ENCODE measurements at regions of chr1 and their contacts with region 1.

Region 1: DNA sequence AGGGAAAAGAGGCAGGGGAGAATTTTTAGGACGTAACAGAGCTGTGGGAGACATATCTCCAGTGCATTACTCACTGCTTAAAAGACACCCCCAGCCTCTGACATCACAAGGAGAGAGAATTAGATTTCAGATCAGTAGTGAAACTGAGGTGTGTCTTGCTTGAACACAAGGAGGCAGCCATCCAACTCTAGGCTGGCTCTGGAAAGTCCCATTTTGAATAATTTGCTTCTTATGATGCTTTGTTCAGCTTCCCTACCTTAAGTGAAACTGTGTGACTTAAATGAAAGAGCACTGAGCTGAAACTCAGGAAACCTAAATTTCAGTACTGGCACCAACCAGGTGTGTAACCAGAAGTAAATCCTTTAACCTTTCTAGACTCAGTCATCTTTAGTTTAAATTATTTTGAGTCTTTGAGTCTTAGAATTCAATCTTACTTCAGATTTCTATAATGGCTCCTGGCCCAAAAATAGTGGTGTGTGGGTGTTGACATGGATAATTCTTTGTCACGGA is 251.6 kb upstream of the SGIP1 start:
- DNase-seq: peak; percentile 98
- ATAC-seq: peak; percentile 75
- H3K4me3 ChIP-seq: peak overlapping the region; percentile 18; the same call in 1 of the 2 replicates
- H3K27ac ChIP-seq: peak overlapping the region; percentile 97
- H3K4me1 ChIP-seq: peaks cover 49% of the 10 kb centered on the region
- H3K27me3 ChIP-seq: no peaks in the 10 kb centered on the region
- CTCF ChIP-seq: peak; percentile 21 to 52 (median 25); a peak in 4 of 6 replicates
- EP300 ChIP-seq: peak; percentile 98 to 99
- POLR2A ChIP-seq: no peak
- RAD21 ChIP-seq: peak; percentile 45; the same call in 1 of the 2 replicates

Region 2: DNA sequence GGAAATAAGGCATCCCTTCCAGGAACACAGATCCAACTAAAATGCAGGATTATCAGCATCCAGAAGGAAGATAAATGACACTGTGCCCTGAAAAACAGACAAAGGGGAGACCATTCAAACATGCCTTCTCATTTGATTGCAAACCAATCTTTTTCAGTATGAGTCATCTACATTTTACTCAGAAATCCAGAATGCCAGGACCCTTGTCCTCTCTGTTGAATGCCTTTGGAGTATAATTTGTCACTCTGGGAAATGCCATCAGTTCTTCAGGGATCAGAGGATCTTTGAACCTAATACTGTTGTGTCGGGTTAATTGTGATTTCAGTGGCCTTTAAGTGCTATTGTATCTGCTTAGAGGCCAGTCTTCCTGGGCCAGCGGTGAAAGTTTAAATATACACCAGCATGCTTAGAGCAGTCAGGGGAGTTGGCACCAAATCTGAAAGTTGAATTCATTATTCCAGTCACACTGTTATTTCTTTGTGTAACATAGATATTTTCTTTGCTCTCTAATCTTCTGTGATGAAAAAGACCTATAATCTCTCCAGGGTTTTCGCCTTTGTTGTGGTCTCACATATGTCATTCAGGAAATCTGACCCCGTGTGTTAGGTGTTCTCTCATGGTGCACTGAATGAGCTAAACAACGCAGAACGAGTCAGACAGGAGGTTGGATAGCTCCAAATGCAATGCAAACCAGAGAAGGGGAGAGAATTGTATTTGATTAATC is 113.3 kb before region 1 on chr1:
- CTCF ChIA-PET with region 1: no interaction called
- POLR2A ChIA-PET with region 1: no interaction called
- RAD21 ChIA-PET with region 1: no interaction called
- SMC1A ChIA-PET with region 1: no interaction called
- in situ Hi-C with region 1: no loop called
- intact Hi-C with region 1: no loop called
- DNase-seq: no peak
- ATAC-seq: no peak
- H3K4me3 ChIP-seq: no peak overlapping the region
- H3K27ac ChIP-seq: no peak overlapping the region
- H3K4me1 ChIP-seq: no peaks in the 10 kb centered on the region
- H3K27me3 ChIP-seq: no peaks in the 10 kb centered on the region
- CTCF ChIP-seq: no peak
- EP300 ChIP-seq: no peak
- POLR2A ChIP-seq: no peak
- RAD21 ChIP-seq: no peak

Region 3: GRCh38 chr1:66217021-66217420 is 65.4 kb before region 1 on chr1:
- CTCF ChIA-PET with region 1: no interaction called
- POLR2A ChIA-PET with region 1: no interaction called
- RAD21 ChIA-PET with region 1: no interaction called
- SMC1A ChIA-PET with region 1: no interaction called
- in situ Hi-C with region 1: no loop called
- intact Hi-C with region 1: no loop called
- DNase-seq: no peak
- ATAC-seq: no peak
- H3K4me3 ChIP-seq: no peak overlapping the region
- H3K27ac ChIP-seq: no peak overlapping the region
- H3K4me1 ChIP-seq: no peaks in the 10 kb centered on the region
- H3K27me3 ChIP-seq: no peaks in the 10 kb centered on the region
- CTCF ChIP-seq: no peak
- EP300 ChIP-seq: no peak
- POLR2A ChIP-seq: no peak
- RAD21 ChIP-seq: no peak

Region 4: GRCh38 chr1:66271216-66271903 is 11.0 kb before region 1 on chr1:
- CTCF ChIA-PET with region 1: interaction called, 5 read pairs
- POLR2A ChIA-PET with region 1: interaction called, 4 read pairs
- RAD21 ChIA-PET with region 1: interaction called, 8 read pairs
- SMC1A ChIA-PET with region 1: interaction called, 15 read pairs
- in situ Hi-C with region 1: no loop called
- intact Hi-C with region 1: no loop called
- DNase-seq: no peak
- ATAC-seq: peak; percentile 58
- H3K4me3 ChIP-seq: no peak overlapping the region
- H3K27ac ChIP-seq: no peak overlapping the region
- H3K4me1 ChIP-seq: peaks cover 21% of the 10 kb centered on the region
- H3K27me3 ChIP-seq: no peaks in the 10 kb centered on the region
- CTCF ChIP-seq: no peak
- EP300 ChIP-seq: peak; percentile 38 to 77; a peak in 1 of 4 replicates
- POLR2A ChIP-seq: no peak
- RAD21 ChIP-seq: no peak

Region 5: GRCh38 chr1:66339944-66340343 is 57.5 kb after region 1 on chr1:
- CTCF ChIA-PET with region 1: interaction called, 37 read pairs
- POLR2A ChIA-PET with region 1: interaction called, 20 read pairs
- RAD21 ChIA-PET with region 1: interaction called, 56 read pairs
- SMC1A ChIA-PET with region 1: interaction called, 290 read pairs
- in situ Hi-C with region 1: no loop called
- intact Hi-C with region 1: loop called (anchors 1 kb)
- DNase-seq: no peak
- ATAC-seq: peak; percentile 8
- H3K4me3 ChIP-seq: peak overlapping the region; percentile 42
- H3K27ac ChIP-seq: peak overlapping the region; percentile 83
- H3K4me1 ChIP-seq: peaks cover 21% of the 10 kb centered on the region
- H3K27me3 ChIP-seq: no peaks in the 10 kb centered on the region
- CTCF ChIP-seq: no peak
- EP300 ChIP-seq: no peak
- POLR2A ChIP-seq: no peak
- RAD21 ChIP-seq: no peak

Region 6: DNA sequence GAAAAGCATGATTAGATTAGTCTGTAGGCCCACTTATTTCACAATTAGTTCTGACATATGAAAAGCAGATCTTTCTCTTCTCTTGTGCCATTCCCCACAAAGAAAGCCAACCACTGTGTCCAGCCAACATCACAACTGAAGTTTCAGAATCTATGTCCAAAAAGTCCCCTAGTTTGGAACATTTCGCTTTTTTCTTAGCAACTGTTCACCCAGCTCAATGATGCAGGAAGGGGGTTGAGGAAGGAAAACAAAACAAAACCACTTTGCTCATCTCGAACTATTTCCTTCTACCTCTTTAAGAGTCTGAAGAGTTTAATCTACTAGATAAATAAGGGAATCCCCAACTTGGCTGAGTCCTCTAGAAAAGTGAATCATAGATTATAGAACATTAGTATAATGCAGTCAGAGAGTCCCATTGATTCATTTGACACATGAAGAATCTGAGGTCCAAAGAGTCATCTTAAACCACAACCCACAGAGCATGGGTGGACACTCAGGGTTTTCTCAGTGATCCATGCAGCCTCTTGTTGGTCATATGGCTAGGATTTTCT is 92.2 kb after region 1 on chr1:
- CTCF ChIA-PET with region 1: interaction called, 10 read pairs
- POLR2A ChIA-PET with region 1: interaction called, 6 read pairs
- RAD21 ChIA-PET with region 1: interaction called, 20 read pairs
- SMC1A ChIA-PET with region 1: interaction called, 19 read pairs
- in situ Hi-C with region 1: no loop called
- intact Hi-C with region 1: loop called (anchors 1 kb)
- DNase-seq: peak; percentile 96
- ATAC-seq: peak; percentile 66
- H3K4me3 ChIP-seq: no peak overlapping the region
- H3K27ac ChIP-seq: peak overlapping the region; percentile 92
- H3K4me1 ChIP-seq: peaks cover 65% of the 10 kb centered on the region
- H3K27me3 ChIP-seq: no peaks in the 10 kb centered on the region
- CTCF ChIP-seq: no peak
- EP300 ChIP-seq: peak; percentile 75 to 85; a peak in 3 of 4 replicates
- POLR2A ChIP-seq: no peak
- RAD21 ChIP-seq: peak; percentile 16

Region 7: DNA sequence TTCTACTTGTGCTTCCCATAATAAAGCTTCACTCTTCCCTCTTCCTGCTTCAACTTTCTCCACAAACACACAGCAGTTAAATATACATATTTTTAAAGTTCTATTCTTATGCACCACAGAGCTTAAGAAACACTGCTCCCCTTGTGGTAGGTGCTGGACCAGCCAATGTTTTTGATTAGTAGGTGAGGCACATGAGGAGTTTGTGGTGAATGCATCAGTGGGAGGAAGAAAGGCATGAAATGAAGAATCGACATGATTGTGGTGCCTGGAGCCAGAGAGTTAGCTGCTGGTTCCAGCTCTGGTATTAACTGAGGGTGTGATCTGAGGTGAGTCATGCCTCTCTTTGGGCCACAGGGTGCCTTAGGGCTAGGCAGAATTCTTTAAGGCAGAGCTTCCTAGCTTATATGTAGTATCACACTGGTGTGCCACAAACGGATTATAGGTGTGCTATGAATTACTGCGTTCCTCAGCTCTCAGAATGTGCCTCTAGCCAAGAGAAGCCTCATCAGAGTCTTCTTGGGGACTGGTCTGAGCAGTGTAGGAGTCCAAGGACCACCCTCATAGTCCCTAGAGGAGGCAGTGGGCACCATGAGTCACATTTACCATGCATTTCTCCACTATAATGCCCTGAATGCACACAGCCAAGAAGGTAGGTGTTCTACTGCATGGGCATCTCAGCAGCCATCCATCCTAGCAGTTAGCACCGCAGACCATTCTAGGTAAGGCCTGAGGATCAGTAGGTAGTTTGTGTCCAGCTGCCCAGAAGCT is 154.2 kb after region 1 on chr1:
- CTCF ChIA-PET with region 1: interaction called, 10 read pairs
- POLR2A ChIA-PET with region 1: interaction called, 3 read pairs
- RAD21 ChIA-PET with region 1: interaction called, 7 read pairs
- SMC1A ChIA-PET with region 1: interaction called, 15 read pairs
- in situ Hi-C with region 1: no loop called
- intact Hi-C with region 1: no loop called
- DNase-seq: peak; percentile 44
- ATAC-seq: peak; percentile 85
- H3K4me3 ChIP-seq: no peak overlapping the region
- H3K27ac ChIP-seq: peak overlapping the region; percentile 7; the same call in 1 of the 2 replicates
- H3K4me1 ChIP-seq: peaks cover 31% of the 10 kb centered on the region
- H3K27me3 ChIP-seq: no peaks in the 10 kb centered on the region
- CTCF ChIP-seq: peak; percentile 27 to 56 (median 50); a peak in 5 of 6 replicates
- EP300 ChIP-seq: no peak
- POLR2A ChIP-seq: no peak
- RAD21 ChIP-seq: peak; percentile 58

Region 8: DNA sequence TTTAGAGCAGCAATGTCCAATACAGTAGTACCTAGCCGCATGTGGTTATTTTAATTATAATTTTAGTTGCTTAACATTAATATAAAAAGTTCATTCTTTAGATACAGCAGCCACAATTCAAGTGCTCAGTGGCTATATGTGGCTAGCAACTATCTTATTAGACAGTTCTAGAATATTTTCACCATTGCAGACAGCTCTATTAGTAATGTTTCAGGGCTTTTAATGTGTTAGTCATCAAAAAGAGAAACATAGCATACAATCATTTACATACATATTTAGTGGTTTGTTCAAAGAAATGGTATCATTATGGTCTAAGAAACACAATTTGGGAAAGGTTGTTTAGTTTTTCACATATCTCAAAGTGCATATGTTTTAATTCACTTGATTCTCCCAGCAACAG is 403.3 kb after region 1 on chr1:
- CTCF ChIA-PET with region 1: no interaction called
- POLR2A ChIA-PET with region 1: no interaction called
- RAD21 ChIA-PET with region 1: no interaction called
- SMC1A ChIA-PET with region 1: no interaction called
- in situ Hi-C with region 1: no loop called
- intact Hi-C with region 1: no loop called
- DNase-seq: no peak
- ATAC-seq: no peak
- H3K4me3 ChIP-seq: no peak overlapping the region
- H3K27ac ChIP-seq: no peak overlapping the region
- H3K4me1 ChIP-seq: no peaks in the 10 kb centered on the region
- H3K27me3 ChIP-seq: no peaks in the 10 kb centered on the region
- CTCF ChIP-seq: no peak
- EP300 ChIP-seq: no peak
- POLR2A ChIP-seq: no peak
- RAD21 ChIP-seq: no peak

Region 9: DNA sequence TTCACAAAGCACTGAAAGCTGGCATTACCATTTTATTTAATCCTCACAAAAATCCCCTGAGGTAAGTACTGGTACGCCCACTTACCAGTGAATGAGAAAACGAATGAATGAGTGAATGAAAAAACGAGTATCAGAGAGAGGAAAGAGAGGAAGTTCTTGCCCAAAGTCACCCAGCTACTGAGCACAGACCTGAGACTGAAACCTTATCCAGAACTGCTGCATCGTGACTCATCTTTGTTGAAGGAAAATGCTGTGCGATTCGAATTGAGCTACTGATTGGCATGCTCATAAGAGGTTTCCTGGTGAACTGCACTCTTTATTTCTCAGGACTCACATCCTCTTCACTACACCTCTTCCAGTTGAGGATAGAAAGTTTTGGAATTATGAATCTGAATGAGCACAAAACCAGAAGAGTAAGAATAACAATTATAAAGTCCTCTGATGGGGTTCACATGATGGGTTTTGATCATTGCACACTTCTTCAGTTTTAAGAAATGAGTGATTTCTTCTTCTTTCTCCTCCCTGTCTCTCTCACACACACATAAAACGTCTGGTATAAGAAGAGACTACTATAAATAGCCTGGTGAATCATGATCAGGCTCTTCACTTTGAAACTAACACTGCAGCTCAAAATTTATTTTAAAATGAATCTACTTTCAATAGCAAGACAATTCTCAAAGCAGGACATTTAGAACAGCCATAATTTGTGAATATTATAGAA is 1057.4 kb after region 1 on chr1:
- CTCF ChIA-PET with region 1: no interaction called
- POLR2A ChIA-PET with region 1: no interaction called
- RAD21 ChIA-PET with region 1: no interaction called
- SMC1A ChIA-PET with region 1: no interaction called
- in situ Hi-C with region 1: loop called (anchors 25 kb)
- intact Hi-C with region 1: loop called (anchors 10 kb)
- DNase-seq: peak; percentile 84
- ATAC-seq: peak; percentile 35
- H3K4me3 ChIP-seq: peak overlapping the region; percentile 20; the same call in 1 of the 2 replicates
- H3K27ac ChIP-seq: peak overlapping the region; percentile 87
- H3K4me1 ChIP-seq: peaks cover 71% of the 10 kb centered on the region
- H3K27me3 ChIP-seq: no peaks in the 10 kb centered on the region
- CTCF ChIP-seq: no peak
- EP300 ChIP-seq: no peak
- POLR2A ChIP-seq: no peak
- RAD21 ChIP-seq: no peak

Measured in GM12878 (cell line).